Heart right ventricle (tissue), 16 donors: ENCODE measurements at regions of chr3 and their contacts with region 1.

Region 1: DNA sequence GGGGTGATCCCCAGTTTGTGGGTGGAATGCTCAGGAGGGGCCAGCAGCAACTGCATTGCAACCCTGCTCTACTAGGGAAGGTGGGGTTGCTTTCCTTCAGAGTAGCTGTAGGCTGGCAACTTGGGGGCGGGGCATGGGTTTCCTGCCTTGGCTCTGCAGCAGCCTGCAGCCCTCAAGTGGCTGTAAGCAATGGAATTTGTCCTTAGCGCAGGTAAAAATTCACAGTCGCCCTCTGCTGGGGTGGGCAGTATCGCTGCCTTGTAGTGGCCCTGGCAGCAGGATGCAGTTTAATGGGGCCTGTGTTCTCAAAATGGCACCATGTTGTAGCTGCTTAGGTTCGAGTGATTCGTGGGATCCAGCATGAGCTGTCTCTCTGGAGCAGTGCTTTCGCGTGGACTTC is 29.8 kb downstream of the STT3B start:
- DNase-seq: peak in 1 of 2 donors; percentile 17
- ATAC-seq: peak in 4 of 8 donors; percentile 10 to 59 (median 24)
- H3K4me3 ChIP-seq: no peak overlapping the region
- H3K27ac ChIP-seq: no peak overlapping the region
- H3K4me1 ChIP-seq: peaks cover 0 to 60% (median 30%) of the 10 kb centered on the region in 9 donors
- H3K27me3 ChIP-seq: no peaks in the 10 kb centered on the region
- CTCF ChIP-seq: no peak

Region 2: GRCh38 chr3:31275038-31275562 is 287.4 kb before region 1 on chr3:
- intact Hi-C with region 1: no loop called
- DNase-seq: no peak
- ATAC-seq: peak in 2 of 8 donors; percentile 30 to 61
- H3K4me3 ChIP-seq: no peak overlapping the region
- H3K27ac ChIP-seq: peak overlapping the region in 1 of 10 donors; percentile 38
- H3K4me1 ChIP-seq: peaks cover 0 to 19% (median 0%) of the 10 kb centered on the region in 9 donors
- H3K27me3 ChIP-seq: no peaks in the 10 kb centered on the region
- CTCF ChIP-seq: no peak

Region 3: GRCh38 chr3:31754575-31755278 is 192.2 kb after region 1 on chr3:
- intact Hi-C with region 1: loop called in 1 of 10 experiments (anchors 5 kb)
- DNase-seq: no peak
- ATAC-seq: no peak
- H3K4me3 ChIP-seq: no peak overlapping the region
- H3K27ac ChIP-seq: no peak overlapping the region
- H3K4me1 ChIP-seq: peaks cover 0 to 15% (median 8%) of the 10 kb centered on the region in 9 donors
- H3K27me3 ChIP-seq: no peaks in the 10 kb centered on the region
- CTCF ChIP-seq: no peak